Uterus (tissue), 4 donors: ENCODE measurements at regions of chr22 and their contacts with region 1.

Region 1: DNA sequence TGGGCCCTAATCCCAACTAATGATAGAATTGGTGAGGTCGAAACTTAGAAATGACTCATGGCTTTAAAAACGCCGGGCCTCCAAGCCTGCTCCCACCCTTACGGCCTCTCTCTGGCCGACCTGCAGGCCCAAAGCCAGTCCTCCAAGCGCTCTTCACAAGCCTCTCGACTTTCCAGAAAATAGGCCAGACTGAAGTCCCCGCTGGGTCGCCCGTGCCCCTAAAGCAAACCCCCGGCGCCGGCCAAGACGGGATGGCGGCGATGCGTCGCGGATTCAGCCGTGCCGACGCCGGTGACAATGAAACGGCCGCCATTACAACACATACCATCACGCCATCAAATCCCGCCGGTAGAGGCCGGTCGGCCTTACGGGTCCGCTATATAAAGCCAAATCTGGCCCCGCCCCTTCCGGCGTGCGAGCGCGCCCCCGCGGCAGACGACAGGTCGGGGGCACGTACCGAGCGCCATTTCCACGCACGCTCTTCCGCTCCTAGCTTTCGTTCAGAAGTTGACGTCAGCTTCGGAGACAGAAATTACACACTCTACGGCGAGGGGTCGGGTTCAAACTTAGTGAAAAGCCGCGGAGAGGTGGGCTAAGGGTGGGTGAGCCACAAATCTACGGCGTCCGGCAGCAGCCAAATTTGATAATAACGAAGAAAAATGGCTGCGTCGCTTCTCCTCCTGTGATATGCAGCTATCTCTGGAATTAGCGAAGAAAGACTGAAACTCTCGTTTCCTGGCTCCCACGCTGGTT is at the start of gene RPL3:
- DNase-seq: peak; percentile 97 to 98
- H3K4me3 ChIP-seq: peak within 1 kb of the TSS; percentile 60 to 63
- H3K27ac ChIP-seq: peak within 1 kb of the TSS; percentile 94 to 96
- H3K4me1 ChIP-seq: peaks cover 0 to 24% of the 10 kb centered on the region in 2 donors
- H3K27me3 ChIP-seq: no peaks in the 10 kb centered on the region
- CTCF ChIP-seq: peak; percentile 17 to 33 (median 23)
- POLR2A ChIP-seq: peak; percentile 61 to 85
- total RNA-seq, gene RPL3: 1,498 to 2,840 (median 2,333) TPM

Region 2: GRCh38 chr22:39152511-39153219 is 166.8 kb before region 1 on chr22 and contains the start of gene CBX7:
- intact Hi-C with region 1: loop called (anchors 5 kb)
- DNase-seq: peak; percentile 95 to 96
- H3K4me3 ChIP-seq: peak within 1 kb of the TSS; percentile 67 to 74
- H3K27ac ChIP-seq: peak within 1 kb of the TSS; percentile 95 to 99
- H3K4me1 ChIP-seq: peaks cover 0 to 22% of the 10 kb centered on the region in 2 donors
- H3K27me3 ChIP-seq: no peaks in the 10 kb centered on the region
- CTCF ChIP-seq: no peak
- POLR2A ChIP-seq: peak; percentile 91 to 94
- total RNA-seq, gene CBX7: 16.0 to 128 (median 102) TPM

Region 3: GRCh38 chr22:39456262-39457197 is 137.1 kb after region 1 on chr22 and contains the start of gene MGAT3:
- intact Hi-C with region 1: no loop called
- DNase-seq: no peak
- H3K4me3 ChIP-seq: peak within 1 kb of the TSS; percentile 20 to 52
- H3K27ac ChIP-seq: peak within 1 kb of the TSS; percentile 1 to 55
- H3K4me1 ChIP-seq: no peaks in the 10 kb centered on the region
- H3K27me3 ChIP-seq: peaks cover 0 to 4% of the 10 kb centered on the region in 2 donors
- CTCF ChIP-seq: no peak
- POLR2A ChIP-seq: no peak
- total RNA-seq, gene MGAT3: 0.26 to 11.8 (median 9.5) TPM in 3 of 4 donors, not detected in the other

Region 4: DNA sequence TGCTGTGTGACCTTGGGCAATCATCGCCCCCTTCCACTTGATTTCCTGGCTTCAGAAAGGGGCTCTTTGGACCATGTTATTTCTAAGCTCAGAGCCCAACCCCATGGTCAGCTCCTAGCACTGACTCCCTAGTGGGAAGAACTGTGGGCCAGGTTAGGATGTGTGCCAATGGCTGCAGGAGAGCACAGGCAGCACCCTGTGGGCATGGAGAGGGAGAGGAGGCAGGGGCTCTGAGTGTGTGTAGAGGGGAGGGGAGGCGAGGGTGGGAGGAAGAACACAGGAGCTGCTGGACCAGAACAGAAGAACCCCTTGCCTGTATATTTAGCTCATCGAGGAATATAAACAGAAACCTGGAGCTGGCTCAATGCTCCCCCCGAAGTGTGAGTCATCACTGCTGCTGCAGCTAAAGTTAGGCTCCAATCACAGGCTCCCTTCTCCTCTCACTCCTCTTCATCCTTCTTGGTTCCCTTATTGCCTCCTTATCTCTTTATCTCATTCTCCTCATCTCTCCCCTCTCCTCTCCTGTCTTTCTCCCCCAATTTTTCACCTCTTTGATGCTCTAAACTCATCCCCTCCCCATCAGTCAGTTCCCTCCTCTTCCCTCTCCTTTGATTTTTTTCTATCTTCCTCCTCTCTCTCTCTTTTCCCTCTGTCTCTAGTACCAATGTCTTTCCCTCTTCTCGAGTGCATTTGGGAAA is 227.6 kb after region 1 on chr22:
- intact Hi-C with region 1: no loop called
- DNase-seq: no peak
- H3K4me3 ChIP-seq: no peak overlapping the region
- H3K27ac ChIP-seq: no peak overlapping the region
- H3K4me1 ChIP-seq: no peaks in the 10 kb centered on the region
- H3K27me3 ChIP-seq: peaks cover 0 to 3% of the 10 kb centered on the region in 2 donors
- CTCF ChIP-seq: no peak
- POLR2A ChIP-seq: no peak